ENCODE measurements at regions of chr22 and their contacts with region 1.

Region 1: GRCh38 chr22:17171313-17172171 is 12.5 kb upstream of the HDHD5 start:
- DNase-seq: peak; percentile 92
- H3K4me3 ChIP-seq: peak overlapping the region; percentile 61 to 82 (median 74)
- H3K27ac ChIP-seq: peak overlapping the region; percentile 91 to 94 (median 92)
- H3K4me1 ChIP-seq: peaks cover 0 to 12% (median 7%) of the 10 kb centered on the region in 4 donors
- H3K27me3 ChIP-seq: no peaks in the 10 kb centered on the region
- CTCF ChIP-seq: peak; percentile 70 to 87 (median 79)
- EP300 ChIP-seq: no peak
- POLR2A ChIP-seq: peak; percentile 19

Region 2: DNA sequence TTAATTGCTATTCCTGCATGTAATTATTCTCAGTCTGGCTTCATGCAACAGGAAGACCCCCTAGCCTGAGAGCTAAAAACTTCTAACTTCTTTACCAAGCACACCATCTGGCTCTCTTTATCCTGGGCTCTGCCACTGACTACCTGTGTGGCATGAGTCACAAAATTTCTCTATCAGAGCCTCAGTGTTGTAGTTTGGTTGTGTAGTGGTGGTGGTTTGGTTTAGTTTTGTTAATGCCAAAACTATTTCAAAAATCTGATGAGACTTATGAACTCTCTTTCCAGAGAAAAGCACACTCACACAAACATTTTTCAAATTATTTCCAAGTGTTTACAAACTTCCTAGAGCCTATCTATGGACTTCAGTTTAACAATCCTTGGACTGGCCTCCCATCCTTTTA is 94.3 kb before region 1 on chr22:
- in situ Hi-C with region 1: loop called in 2 of 4 experiments (anchors 10 kb)
- intact Hi-C with region 1: no loop called
- DNase-seq: no peak
- H3K4me3 ChIP-seq: no peak overlapping the region
- H3K27ac ChIP-seq: no peak overlapping the region
- H3K4me1 ChIP-seq: no peaks in the 10 kb centered on the region
- H3K27me3 ChIP-seq: no peaks in the 10 kb centered on the region
- CTCF ChIP-seq: no peak
- EP300 ChIP-seq: no peak
- POLR2A ChIP-seq: no peak

Measured in transverse colon (tissue), 4 donors.